ENCODE measurements at regions of chr2 and their contacts with region 1.

Region 1: DNA sequence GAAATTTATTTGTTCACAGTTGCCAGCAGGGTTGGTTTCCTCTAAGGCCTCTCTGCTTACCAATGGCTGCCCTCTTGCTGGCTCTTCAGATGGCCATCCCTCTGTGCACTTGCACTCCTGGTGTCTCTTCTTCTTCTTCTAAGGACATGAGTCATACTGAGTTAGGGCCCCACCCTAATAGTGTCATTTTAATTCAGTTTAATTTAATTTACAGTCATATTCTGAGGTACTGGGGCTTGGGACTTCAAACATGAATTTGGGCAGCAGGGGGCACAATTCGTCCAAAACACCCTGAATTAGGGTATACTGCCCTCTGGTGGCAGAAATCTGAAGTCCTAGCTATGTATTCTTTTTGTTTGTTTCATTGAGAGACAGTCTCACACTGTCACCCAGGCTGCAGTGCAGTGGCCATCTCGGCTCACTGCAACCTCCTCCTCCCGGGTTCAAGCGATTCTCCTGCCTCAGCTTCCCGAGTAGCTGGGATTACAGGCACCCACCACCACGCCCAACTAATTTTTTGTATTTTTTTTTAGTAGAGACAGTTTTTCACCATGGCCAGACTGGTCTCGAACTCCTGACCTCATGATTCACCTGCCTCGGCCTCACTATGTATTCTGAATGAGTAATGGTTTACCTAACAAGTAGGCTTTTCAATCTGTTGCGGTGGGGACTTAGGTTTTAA is 19.8 kb downstream of the SLC4A1AP start:
- DNase-seq: peak; percentile 96
- ATAC-seq: peak; percentile 95
- H3K4me3 Mint-ChIP-seq: peak overlapping the region; percentile 26
- H3K27ac Mint-ChIP-seq: peak overlapping the region; percentile 85
- H3K4me1 Mint-ChIP-seq: peaks cover 29% of the 10 kb centered on the region
- H3K27me3 Mint-ChIP-seq: no peaks in the 10 kb centered on the region

Region 2: GRCh38 chr2:27184115-27184514 is 499.4 kb before region 1 on chr2:
- CTCF ChIA-PET with region 1: no interaction called
- POLR2A ChIA-PET with region 1: no interaction called
- DNase-seq: no peak
- ATAC-seq: no peak
- H3K4me3 Mint-ChIP-seq: no peak overlapping the region
- H3K27ac Mint-ChIP-seq: no peak overlapping the region
- H3K4me1 Mint-ChIP-seq: peaks cover 2% of the 10 kb centered on the region
- H3K27me3 Mint-ChIP-seq: peaks cover 40% of the 10 kb centered on the region

Region 3: DNA sequence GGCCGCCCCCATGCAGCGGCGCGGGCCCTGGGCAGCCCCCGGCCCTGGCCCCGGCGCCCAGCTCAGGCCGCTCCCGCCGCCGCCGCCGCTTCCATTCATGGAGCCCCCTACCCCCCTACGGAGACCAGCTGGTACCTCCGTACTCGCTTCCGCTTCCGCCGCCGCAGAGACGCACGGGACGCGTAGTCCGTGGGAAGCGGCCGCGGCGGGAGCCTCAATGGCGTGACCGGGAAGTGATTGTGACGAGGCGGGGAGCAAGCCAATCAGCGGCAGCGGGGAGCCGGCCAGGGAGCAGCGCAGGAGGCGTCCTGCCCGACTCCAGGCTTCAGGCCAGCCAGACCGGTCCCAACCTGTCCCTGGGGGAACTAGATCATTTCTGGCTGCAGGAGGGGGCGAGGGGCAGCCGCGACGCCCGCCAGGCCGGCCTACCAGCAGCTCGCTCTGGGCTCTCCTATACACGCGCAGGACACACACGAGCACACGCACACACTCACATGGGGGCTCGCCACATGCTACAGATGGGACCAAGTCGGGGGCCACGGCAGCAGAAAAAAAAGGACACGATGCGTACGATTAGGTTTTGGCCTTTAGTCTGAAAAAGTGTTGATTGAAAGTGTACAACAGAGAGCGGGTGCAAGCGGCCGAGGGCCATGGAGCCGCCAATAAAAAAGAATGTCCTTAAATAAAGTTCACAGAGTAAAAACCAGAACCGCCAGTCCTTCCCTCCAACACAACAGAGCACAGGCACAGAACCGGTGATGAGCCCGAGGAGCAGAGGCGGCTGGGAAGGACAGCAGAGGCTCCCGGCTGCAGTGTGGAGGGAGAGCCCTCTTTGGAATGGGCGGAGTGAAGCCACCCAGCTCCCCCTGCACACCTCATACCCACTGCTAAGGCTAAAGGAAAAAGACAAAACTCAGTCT is 302.6 kb before region 1 on chr2 and contains the start of gene ZNF513:
- CTCF ChIA-PET with region 1: interaction called, 15 read pairs
- POLR2A ChIA-PET with region 1: no interaction called
- DNase-seq: peak; percentile 90
- ATAC-seq: peak; percentile 85
- H3K4me3 Mint-ChIP-seq: peak within 1 kb of the TSS; percentile 90
- H3K27ac Mint-ChIP-seq: peak within 1 kb of the TSS; percentile 97
- H3K4me1 Mint-ChIP-seq: peaks cover 33% of the 10 kb centered on the region
- H3K27me3 Mint-ChIP-seq: no peaks in the 10 kb centered on the region
- total RNA-seq, gene ZNF513: 11.8 to 13.3 TPM

Region 4: DNA sequence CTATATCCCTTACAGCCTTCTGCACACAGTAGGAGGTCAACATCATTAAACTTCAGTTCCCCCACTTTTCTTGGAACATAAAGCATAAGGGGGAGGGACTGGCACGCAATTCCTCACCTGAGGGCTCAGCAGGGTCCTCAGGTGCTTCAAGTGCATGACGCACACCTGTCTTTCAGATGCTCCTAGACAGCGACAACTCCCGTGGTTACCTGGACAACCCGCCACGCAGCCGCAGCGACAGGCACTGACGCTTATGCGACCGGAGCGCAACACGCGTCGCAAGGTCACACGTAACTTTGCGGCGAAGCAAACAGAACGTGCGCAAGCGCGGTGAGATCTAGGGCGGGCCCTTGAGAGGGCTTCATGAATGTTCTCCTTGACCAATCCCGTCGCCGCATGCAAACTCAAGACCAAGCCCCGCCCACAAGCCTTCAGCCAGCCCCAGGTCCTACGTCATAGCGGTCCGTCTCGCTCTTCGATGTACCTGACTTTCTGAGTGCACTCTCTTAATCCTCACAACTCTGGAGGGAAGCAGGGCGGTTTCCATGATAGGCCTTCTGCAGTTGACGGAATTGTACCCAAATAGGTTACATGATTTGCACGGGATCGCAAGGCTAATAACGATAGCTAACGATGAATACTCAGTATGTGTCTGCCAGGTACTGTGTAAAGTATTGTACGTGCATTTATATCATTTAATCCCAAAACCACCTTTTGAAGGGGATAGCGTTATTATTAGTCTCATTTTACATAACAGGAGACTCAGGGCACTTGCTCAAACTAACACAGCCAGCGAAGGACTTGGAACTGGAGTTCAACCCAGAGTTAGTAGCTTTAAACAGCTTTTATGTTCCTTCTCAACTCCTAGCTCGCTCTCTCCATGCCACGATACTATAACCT is 193.8 kb before region 1 on chr2 and contains the start of gene IFT172:
- CTCF ChIA-PET with region 1: interaction called, 15 read pairs
- POLR2A ChIA-PET with region 1: no interaction called
- DNase-seq: peak; percentile 100
- ATAC-seq: peak; percentile 95
- H3K4me3 Mint-ChIP-seq: peak within 1 kb of the TSS; percentile 77
- H3K27ac Mint-ChIP-seq: peak within 1 kb of the TSS; percentile 88
- H3K4me1 Mint-ChIP-seq: peaks cover 29% of the 10 kb centered on the region
- H3K27me3 Mint-ChIP-seq: peaks cover 14% of the 10 kb centered on the region
- total RNA-seq, gene IFT172: 10.0 to 11.2 TPM

Region 5: DNA sequence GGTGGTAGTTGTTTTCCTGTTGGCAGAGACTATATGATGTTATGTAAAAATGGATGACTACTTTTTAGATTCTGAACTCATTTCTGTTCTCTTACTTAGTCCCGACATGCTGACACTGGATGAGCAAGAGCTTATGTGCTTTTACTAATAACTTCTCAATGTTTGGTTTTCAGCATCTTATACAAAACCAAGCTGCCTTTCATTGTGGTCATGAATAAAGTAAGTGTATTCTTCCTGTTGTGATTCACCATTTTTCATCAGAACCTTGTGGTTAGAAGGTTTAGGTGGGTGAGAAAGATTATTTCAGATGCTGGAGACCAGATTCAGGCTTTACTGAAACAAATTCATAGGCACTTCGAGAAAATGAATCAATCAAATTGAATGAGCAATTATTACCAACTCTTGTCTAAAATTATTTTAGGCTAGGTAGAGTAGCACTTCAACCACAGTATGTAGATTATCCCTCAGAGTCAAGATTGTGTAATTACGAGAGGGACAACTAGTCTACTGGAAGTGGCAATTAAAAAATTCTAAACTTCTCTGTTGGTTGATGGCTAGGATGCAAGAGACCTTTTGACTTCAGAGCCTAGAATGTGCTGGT is 45.4 kb before region 1 on chr2:
- CTCF ChIA-PET with region 1: interaction called, 24 read pairs
- POLR2A ChIA-PET with region 1: no interaction called
- DNase-seq: no peak
- ATAC-seq: peak; percentile 83
- H3K4me3 Mint-ChIP-seq: peak overlapping the region; percentile 46
- H3K27ac Mint-ChIP-seq: peak overlapping the region; percentile 83
- H3K4me1 Mint-ChIP-seq: peaks cover 21% of the 10 kb centered on the region
- H3K27me3 Mint-ChIP-seq: no peaks in the 10 kb centered on the region

Region 6: GRCh38 chr2:27663463-27664249 is 19.9 kb before region 1 on chr2 and contains the starts of genes SLC4A1AP and SUPT7L:
- CTCF ChIA-PET with region 1: interaction called, 30 read pairs
- POLR2A ChIA-PET with region 1: interaction called, 7 read pairs
- DNase-seq: peak; percentile 81
- ATAC-seq: peak; percentile 82
- H3K4me3 Mint-ChIP-seq: peak within 1 kb of the TSS; percentile 99
- H3K27ac Mint-ChIP-seq: peak within 1 kb of the TSS; percentile 100
- H3K4me1 Mint-ChIP-seq: peaks cover 45% of the 10 kb centered on the region
- H3K27me3 Mint-ChIP-seq: no peaks in the 10 kb centered on the region
- total RNA-seq, gene SLC4A1AP: 24.2 to 25.2 TPM
- total RNA-seq, gene SUPT7L: 30.1 to 30.8 TPM

Region 7: GRCh38 chr2:27723372-27724144 is 40.0 kb after region 1 on chr2:
- CTCF ChIA-PET with region 1: interaction called, 13 read pairs
- POLR2A ChIA-PET with region 1: no interaction called
- DNase-seq: peak; percentile 51
- ATAC-seq: peak; percentile 43
- H3K4me3 Mint-ChIP-seq: no peak overlapping the region
- H3K27ac Mint-ChIP-seq: no peak overlapping the region
- H3K4me1 Mint-ChIP-seq: peaks cover 37% of the 10 kb centered on the region
- H3K27me3 Mint-ChIP-seq: peaks cover 4% of the 10 kb centered on the region

Region 8: DNA sequence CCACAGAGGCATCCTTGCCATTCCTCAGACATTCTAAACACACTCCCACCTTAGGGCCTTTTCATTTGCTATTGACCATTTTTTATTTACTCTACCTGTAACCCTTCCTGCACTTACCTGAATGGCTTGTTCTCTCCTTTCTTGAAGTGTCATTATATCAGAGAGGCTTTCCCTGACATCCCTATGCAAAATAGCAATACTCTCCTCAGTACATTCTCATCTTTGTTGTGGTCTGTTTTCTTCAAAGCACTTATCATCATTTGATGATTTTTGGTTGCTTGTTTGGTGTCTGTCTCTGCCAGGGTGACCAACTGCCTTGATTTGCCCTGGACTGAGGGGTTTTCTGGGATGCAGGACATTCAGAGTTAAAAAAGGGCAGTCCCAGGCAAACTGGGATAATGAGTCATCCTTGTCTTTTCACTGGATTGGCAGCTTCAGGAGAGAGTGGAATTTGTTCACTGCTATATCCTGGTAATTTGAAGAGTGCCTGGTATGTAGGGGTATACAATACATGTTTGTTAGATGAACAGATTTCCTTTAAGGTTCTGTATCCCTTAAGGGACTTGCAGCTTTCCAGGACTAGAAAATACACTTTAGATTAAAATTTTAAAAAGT is 309.4 kb after region 1 on chr2:
- CTCF ChIA-PET with region 1: no interaction called
- POLR2A ChIA-PET with region 1: no interaction called
- DNase-seq: no peak
- ATAC-seq: no peak
- H3K4me3 Mint-ChIP-seq: no peak overlapping the region
- H3K27ac Mint-ChIP-seq: no peak overlapping the region
- H3K4me1 Mint-ChIP-seq: peaks cover 28% of the 10 kb centered on the region
- H3K27me3 Mint-ChIP-seq: no peaks in the 10 kb centered on the region

Region 9: GRCh38 chr2:28566521-28567041 is 883.0 kb after region 1 on chr2:
- CTCF ChIA-PET with region 1: no interaction called
- POLR2A ChIA-PET with region 1: no interaction called
- DNase-seq: peak; percentile 92
- ATAC-seq: peak; percentile 98
- H3K4me3 Mint-ChIP-seq: peak overlapping the region; percentile 85
- H3K27ac Mint-ChIP-seq: peak overlapping the region; percentile 87
- H3K4me1 Mint-ChIP-seq: peaks cover 29% of the 10 kb centered on the region
- H3K27me3 Mint-ChIP-seq: peaks cover 8% of the 10 kb centered on the region

Measured in activated CD8-positive, alpha-beta T cell treated with anti-CD3 and anti-CD28 coated beads, Interleukin-2, amount 10 ng/mL, durations not matched to agents 7 days and 5 days (primary cell).